Activated naive CD8-positive, alpha-beta T cell treated with anti-CD3 and anti-CD28 coated beads, Interleukin-2, amount 10 ng/mL, durations not matched to agents 7 days and 5 days (primary cell): ENCODE measurements at regions of chr6 and their contacts with region 1.

Region 1: DNA sequence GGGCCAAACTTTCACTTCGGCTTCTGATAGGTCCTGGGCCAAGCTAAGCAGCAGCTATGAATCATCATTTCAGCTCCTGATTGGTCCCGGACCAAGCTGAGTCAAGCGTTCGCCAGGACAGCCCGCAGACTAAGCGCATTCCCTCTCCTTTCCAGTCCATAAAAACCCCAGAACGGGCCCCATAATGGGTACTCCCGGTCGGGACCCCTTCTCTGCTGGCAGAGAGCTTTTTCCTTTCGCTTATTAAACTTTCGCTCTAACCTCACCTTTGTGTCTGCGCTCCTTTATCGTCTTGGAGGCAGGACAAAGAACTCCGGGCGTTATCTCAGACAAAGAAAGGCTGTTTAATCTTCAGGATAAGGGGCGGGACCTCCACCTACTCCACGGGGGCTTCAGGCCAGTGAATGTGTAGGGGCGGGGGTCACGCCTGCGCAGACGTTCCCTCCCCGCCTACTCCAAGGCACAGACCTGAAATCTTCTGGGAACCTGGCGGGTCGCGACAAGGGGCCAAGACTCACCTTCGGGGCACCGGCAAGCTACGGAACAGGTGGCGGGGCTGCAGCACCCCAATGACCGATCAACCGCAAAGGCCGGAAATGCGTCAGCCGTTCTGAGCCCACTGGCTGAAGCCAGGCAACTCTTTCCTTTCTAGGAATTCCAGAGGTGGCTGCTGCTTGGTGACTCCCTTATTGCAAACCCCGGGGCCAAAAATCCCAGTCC is at the start of gene ZSCAN31:
- DNase-seq: peak; percentile 76
- ATAC-seq: peak; percentile 94
- H3K4me3 Mint-ChIP-seq: no peak within 1 kb of the TSS
- H3K27ac Mint-ChIP-seq: no peak within 1 kb of the TSS
- H3K4me1 Mint-ChIP-seq: peaks cover 6% of the 10 kb centered on the region
- H3K27me3 Mint-ChIP-seq: no peaks in the 10 kb centered on the region
- total RNA-seq, gene ZSCAN31: 1.9 to 2.0 TPM

Region 2: DNA sequence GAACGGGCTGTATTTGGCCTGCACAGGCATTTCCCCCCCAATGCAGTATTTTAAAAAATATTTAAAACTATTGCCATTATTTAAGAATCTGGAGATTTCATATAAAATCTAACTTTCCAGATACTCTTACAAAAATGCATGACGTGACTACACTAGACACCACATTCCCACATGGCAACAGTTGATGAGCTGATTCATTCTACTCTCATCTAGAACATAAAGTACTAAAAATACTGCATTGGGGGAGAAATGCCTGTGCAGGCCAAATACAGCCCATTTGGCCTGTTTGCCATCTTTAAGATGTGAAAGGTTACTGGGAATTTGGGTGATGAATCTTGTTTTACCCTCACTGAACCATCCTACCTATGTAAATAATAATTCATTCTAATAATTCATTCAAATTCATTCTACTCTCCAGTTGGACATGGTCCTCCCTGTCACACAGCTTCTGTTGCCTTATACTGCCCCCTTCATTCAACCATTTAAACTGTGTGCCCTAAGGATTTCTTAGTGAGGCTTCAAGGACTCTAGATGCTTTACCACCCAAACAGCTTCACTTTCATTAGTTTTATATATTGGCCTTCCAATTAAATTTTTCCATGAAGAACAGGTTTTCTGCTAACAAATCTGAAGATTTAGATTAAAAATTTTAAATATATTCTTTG is 218.2 kb before region 1 on chr6:
- POLR2A ChIA-PET with region 1: no interaction called
- DNase-seq: no peak
- ATAC-seq: no peak
- H3K4me3 Mint-ChIP-seq: no peak overlapping the region
- H3K27ac Mint-ChIP-seq: no peak overlapping the region
- H3K4me1 Mint-ChIP-seq: no peaks in the 10 kb centered on the region
- H3K27me3 Mint-ChIP-seq: no peaks in the 10 kb centered on the region

Region 3: DNA sequence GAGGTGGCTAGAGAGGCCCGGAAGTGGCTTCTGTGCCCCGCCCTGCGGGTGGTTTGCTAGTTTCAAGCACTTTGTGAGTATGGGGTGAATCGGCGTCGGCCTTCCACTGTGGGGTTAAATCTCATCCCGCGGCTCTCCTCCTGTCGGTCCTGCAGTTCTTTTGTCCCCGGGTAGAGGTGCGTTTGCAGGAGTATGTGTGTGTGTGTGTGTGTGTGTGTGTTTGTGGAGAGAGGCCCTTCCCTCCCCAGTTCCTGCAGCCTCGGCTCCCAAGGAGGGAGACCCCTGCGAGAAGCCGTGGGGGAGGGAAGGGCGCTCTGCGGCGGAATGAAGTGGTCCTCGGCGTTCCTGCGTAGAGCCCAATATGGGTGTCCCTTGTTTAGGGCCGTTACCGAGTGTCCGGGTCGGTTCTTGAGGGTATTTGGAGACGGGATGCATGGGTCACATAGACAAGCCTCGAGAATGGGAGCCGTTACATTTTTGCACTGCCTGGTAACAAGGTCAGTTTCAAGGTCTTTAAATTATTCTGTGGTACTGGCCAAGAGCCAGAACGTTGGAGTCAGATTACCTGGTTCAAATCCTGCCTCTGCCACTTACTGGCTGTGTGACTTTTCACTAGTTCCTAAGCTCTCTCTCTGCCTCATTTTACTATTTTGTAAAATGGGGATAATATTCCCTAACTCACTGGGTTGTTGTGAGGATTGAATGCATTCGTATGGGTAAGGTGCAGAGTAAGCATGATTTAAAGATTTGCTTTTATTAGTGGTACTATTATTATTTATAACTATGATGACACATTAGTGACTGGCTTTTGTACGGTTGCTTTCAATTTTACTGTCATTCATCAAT is 14.4 kb after region 1 on chr6 and contains the start of gene ZKSCAN3:
- POLR2A ChIA-PET with region 1: interaction called, 15 read pairs
- DNase-seq: peak; percentile 85
- ATAC-seq: peak; percentile 99
- H3K4me3 Mint-ChIP-seq: peak within 1 kb of the TSS; percentile 100
- H3K27ac Mint-ChIP-seq: peak within 1 kb of the TSS; percentile 99
- H3K4me1 Mint-ChIP-seq: peaks cover 22% of the 10 kb centered on the region
- H3K27me3 Mint-ChIP-seq: peaks cover 13% of the 10 kb centered on the region
- total RNA-seq, gene ZKSCAN3: 7.0 to 7.6 TPM

Region 4: GRCh38 chr6:28390688-28391087 is 55.0 kb after region 1 on chr6:
- POLR2A ChIA-PET with region 1: no interaction called
- DNase-seq: no peak
- ATAC-seq: no peak
- H3K4me3 Mint-ChIP-seq: no peak overlapping the region
- H3K27ac Mint-ChIP-seq: no peak overlapping the region
- H3K4me1 Mint-ChIP-seq: peaks cover 26% of the 10 kb centered on the region
- H3K27me3 Mint-ChIP-seq: no peaks in the 10 kb centered on the region